ENCODE measurements at regions of chr2 and their contacts with region 1.

Region 1: DNA sequence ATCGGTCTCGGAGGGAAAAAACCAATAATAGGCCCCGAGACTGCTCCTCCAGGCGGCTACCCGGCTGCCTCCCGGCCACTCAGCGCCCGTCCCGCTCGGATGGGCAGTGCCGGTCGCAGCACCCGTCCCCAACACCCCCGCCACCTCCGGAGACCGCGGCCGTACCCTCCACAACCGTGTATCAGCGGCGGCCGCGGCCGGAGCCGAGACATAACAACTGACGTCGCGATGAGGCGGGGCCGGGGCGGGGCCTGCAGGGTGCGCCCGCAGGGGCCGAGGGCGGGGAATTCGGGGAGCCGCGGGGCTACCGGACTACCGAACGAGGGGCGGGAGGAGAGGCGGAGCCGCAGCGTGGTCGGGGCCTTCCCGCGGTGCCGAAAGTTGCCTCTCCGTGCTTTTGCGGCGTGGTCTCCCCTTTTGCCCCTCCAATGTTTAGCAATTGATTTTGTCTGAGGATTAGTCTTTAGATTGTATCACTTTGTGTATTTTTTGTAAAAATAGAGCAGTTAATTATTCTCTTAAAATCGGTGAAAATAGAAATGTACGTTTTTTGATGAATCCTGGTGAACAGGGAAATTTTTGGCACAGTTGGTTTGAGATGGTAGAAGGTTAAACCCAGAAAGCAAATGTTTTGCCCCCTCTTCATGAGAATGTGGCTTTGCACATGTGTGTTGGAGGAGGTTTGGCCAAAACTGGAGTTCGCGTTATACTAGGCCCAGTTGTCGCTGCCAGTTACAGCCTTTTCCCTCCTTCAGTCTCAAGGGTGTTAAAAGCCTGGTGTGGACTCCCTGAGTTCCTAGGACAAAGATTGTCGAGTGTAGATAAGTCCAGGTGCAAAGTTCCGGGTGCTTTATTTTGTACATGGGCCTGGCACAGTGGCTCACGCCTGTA is at the start of gene RNF103:
- DNase-seq: peak; percentile 99
- ATAC-seq: peak; percentile 97
- total RNA-seq, gene RNF103: 49.6 TPM

Region 2: DNA sequence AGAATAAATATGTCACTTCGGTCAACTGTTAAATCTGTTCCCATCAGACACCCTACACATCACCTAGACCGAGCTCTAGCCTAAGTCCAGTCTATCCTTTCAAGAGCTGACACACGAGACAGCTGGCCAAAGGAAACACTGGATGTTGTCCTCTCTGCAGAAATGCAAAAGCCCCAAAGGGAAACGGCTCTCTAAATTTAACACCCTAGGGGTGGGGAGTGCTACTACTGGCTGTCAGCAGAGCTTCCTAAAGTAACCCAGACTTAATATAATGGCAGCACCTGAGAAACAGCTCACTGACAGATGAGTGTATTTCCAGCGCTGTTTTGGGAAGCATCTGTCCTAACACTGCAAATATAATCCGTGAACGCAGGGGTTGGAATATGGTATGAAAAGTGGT is 116.3 kb before region 1 on chr2:
- intact Hi-C with region 1: loop called (anchors 5 kb)
- DNase-seq: no peak
- ATAC-seq: peak; percentile 47

Region 3: DNA sequence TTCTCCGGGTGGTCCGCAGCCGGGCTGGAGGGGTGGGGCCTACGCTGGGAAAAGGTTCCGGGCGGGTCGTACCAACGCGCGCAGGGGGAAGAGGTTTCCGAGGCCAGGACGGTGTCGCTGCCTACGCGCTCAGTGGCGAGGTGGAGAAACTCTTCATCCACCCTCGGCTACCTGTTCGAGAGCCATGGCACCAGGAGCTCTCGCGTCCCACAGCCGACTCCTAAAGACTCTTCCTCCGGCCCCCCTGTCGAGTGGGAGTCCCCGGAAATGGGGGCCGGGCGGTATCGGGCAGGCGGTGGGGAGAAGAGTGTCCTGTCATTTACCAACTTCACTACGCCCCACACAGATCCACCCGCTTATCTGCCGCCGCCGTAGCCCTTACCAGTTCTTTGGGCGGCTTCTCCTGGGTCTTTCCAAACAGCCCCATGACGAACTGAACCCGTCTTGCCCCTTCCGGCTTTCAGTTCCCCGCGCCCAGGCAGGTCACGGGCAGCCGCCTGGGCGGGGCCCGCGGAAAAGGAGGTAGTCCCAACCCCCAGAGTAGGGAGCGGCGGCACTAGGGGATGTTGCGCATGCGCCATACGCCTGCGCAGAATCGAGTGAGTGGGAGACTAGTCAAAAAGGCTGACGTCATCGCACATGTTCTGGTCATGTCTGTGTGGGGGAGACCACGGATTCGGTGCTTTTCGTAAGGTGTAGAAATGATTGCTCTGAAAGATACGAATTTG is 60.8 kb before region 1 on chr2 and contains the start of gene CHMP3:
- intact Hi-C with region 1: loop called (anchors 2 kb)
- DNase-seq: peak; percentile 98
- ATAC-seq: peak; percentile 99
- total RNA-seq, gene CHMP3: 171 TPM

Region 4: DNA sequence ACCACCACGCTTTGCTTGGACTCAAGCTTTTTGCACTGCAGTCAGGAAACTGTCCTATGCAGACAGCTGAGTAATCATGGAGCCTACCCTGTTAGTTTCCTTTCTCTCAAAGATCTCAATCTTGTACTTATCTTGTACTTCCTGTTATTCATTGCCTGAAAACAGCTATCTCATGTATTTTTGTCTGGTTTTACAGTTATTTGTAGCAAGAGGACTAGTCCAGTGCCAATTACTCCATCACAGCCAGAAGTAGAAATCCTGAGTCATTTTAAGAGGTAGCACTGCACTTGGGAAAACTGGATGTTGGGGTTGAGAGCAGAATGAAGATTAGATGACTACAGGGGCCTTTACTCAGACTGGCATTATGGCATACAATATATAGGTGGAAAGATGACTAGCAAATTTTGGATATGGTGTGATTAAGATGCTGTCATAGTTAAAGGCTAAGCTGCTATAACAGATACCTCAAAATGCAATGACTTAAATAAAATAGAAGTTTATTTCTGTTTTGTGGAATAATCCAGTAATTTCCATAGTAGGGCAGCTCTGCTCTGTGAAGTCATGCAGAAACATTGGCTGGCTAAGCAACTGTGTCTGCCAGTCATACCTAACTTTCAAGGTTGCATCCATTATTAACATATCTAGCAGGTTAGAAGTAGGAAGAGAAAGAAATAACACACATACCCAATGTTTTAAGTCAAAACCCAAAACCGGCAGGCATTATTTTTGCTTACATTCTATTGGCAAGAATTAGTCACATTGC is 39.6 kb before region 1 on chr2:
- intact Hi-C with region 1: no loop called
- DNase-seq: no peak
- ATAC-seq: peak; percentile 52

Region 5: GRCh38 chr2:86671337-86671981 is 47.6 kb after region 1 on chr2:
- intact Hi-C with region 1: loop called (anchors 2 kb)
- DNase-seq: no peak
- ATAC-seq: peak; percentile 77

Region 6: DNA sequence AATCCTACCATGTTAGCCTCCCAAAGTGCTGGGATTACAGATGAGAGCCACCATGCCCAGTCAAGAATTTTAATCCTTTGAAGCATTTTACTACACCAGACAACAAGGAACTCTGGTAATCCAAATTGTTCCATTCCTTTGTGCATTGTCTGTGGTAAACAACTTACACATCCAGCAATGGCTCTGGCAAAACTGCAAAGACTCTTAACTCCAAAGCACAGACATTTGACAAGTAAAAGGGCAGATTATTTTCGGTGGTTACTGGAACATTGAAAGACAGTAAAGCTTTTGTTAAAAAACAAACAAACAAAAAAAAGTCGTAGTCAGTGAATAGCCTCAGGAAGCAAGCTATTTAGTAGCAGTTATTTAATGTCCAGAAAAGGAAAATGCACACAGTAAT is 63.0 kb after region 1 on chr2:
- intact Hi-C with region 1: no loop called
- DNase-seq: no peak
- ATAC-seq: no peak